Calu3 (cell line): ENCODE measurements at regions of chr3 and their contacts with region 1.

Region 1: GRCh38 chr3:147616998-147617619 is 207.9 kb downstream of the ZIC1 start:
- DNase-seq: no peak
- H3K4me3 Mint-ChIP-seq: no peak overlapping the region
- H3K27ac Mint-ChIP-seq: no peak overlapping the region
- H3K4me1 Mint-ChIP-seq: no peaks in the 10 kb centered on the region
- H3K27me3 Mint-ChIP-seq: no peaks in the 10 kb centered on the region
- CTCF ChIP-seq: peak; percentile 51

Region 2: GRCh38 chr3:146817704-146818103 is 799.4 kb before region 1 on chr3:
- CTCF ChIA-PET with region 1: interaction called, 3 read pairs
- intact Hi-C with region 1: loop called (anchors 5 kb)
- DNase-seq: no peak
- H3K4me3 Mint-ChIP-seq: no peak overlapping the region
- H3K27ac Mint-ChIP-seq: no peak overlapping the region
- H3K4me1 Mint-ChIP-seq: no peaks in the 10 kb centered on the region
- H3K27me3 Mint-ChIP-seq: no peaks in the 10 kb centered on the region
- CTCF ChIP-seq: peak; percentile 32

Region 3: DNA sequence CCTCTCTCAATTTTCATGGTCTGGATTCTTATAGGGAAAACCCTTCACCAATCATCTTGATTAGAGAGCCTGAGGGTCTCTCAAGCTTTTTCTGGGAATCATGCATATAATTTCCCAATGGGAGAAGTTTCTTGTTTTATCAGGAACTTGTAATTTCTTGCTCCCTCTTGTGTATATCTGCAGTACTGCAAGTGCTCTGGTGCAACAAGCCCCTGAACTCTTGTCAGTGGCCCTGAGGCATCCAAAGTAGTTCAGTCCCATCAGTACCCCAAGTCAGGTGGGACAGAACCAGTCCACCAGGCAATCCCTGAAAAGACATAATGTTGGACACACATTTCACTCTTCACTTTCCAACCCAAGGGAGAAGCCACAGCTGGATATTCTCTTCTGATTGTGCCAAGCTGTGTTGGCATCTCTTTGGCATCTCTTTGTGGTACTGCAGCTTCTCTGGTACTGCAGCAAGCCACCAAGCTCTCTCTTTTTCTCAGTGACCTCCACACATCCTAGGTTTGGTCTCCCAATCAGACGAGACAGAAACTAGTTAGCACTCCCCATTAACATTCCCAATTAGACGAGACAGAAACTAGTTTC is 425.2 kb before region 1 on chr3:
- CTCF ChIA-PET with region 1: no interaction called
- intact Hi-C with region 1: loop called (anchors 5 kb)
- DNase-seq: peak; percentile 81
- H3K4me3 Mint-ChIP-seq: no peak overlapping the region
- H3K27ac Mint-ChIP-seq: no peak overlapping the region
- H3K4me1 Mint-ChIP-seq: no peaks in the 10 kb centered on the region
- H3K27me3 Mint-ChIP-seq: no peaks in the 10 kb centered on the region
- CTCF ChIP-seq: peak; percentile 97

Region 4: DNA sequence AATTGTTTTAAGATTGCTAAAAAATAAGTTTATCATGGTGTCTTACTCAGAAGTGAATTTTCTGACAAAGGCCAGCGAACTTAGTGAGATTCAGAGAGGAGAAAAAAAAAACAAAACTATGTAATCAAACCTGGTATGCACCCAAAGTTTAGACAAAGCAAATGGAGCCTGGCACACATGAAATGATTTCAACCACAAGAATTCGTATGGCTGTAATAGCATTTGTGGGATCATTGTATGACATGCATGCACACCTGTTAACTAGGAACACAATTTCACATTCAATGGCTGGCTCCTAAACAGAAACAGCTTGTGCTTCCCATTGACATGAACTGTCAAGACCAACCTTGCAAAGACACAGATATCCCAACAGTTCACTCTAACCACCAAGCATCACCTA is 305.4 kb before region 1 on chr3:
- CTCF ChIA-PET with region 1: no interaction called
- intact Hi-C with region 1: no loop called
- DNase-seq: no peak
- H3K4me3 Mint-ChIP-seq: no peak overlapping the region
- H3K27ac Mint-ChIP-seq: no peak overlapping the region
- H3K4me1 Mint-ChIP-seq: no peaks in the 10 kb centered on the region
- H3K27me3 Mint-ChIP-seq: no peaks in the 10 kb centered on the region
- CTCF ChIP-seq: no peak

Region 5: DNA sequence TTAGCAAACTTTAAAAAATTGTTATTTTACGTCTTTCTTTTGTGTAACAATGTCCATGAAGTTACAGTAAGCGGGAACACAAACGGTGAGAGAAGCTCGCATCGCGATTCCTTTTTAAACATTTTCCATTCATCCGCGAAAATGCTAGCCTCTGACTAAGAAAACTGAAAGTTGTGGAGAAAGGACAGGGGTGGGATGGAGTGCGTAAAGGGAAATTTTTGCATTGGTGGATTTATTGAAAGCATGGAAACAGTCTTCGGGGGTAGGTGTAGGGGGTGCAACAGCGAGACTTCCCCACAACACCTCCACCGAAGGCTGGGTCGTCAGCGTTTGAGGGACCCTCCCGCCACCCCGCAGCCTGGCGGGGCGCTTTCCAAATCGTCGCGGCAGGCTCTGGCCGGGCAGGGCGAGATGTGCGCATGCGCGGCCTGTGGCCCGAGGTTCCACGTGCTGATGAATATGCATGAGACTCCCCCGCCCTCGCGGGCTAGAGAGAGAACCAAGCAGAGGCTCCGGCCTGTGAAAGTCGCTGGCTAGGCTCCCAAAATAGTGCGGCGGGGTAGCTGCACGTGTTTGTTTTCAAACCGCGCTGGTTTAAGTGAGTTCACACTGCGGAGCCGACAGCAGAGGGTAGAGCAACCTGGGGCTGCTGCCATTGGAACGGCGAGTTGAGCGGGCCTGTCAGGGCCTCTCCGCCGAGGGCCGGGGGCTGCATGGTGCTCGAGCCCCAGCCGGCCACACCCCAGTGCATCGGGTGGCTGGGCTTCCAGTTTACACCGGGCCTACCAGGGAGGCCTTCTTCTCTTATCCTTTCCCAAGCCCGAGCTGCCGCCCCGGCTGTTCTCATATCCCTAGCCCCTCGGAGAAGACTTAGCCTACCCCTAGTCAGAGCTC is 198.1 kb before region 1 on chr3:
- CTCF ChIA-PET with region 1: no interaction called
- intact Hi-C with region 1: loop called (anchors 5 kb)
- DNase-seq: no peak
- H3K4me3 Mint-ChIP-seq: no peak overlapping the region
- H3K27ac Mint-ChIP-seq: no peak overlapping the region
- H3K4me1 Mint-ChIP-seq: no peaks in the 10 kb centered on the region
- H3K27me3 Mint-ChIP-seq: no peaks in the 10 kb centered on the region
- CTCF ChIP-seq: no peak

Region 6: DNA sequence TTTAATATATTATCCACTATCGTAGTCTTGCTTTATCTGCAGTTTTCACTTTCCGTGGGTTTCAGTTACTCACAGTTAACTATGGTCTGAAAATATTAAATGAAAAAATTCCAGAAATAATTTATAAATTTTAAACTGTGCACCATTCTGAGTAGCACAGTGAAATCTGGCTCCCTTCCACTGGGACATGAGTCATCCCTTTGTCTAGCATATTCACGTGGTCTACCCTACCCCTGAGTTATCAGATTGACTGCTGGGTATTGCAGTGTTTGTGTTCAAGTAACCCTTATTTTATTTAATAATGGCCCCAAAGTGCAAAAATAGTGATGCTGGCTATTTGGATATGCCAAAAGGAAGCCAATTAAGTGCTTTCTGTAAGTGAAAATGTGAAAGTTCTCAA is 541.1 kb after region 1 on chr3:
- CTCF ChIA-PET with region 1: no interaction called
- intact Hi-C with region 1: loop called (anchors 10 kb)
- DNase-seq: peak; percentile 78
- H3K4me3 Mint-ChIP-seq: no peak overlapping the region
- H3K27ac Mint-ChIP-seq: no peak overlapping the region
- H3K4me1 Mint-ChIP-seq: no peaks in the 10 kb centered on the region
- H3K27me3 Mint-ChIP-seq: no peaks in the 10 kb centered on the region
- CTCF ChIP-seq: no peak